ENCODE measurements at regions of chr13 and their contacts with region 1.

Region 1: DNA sequence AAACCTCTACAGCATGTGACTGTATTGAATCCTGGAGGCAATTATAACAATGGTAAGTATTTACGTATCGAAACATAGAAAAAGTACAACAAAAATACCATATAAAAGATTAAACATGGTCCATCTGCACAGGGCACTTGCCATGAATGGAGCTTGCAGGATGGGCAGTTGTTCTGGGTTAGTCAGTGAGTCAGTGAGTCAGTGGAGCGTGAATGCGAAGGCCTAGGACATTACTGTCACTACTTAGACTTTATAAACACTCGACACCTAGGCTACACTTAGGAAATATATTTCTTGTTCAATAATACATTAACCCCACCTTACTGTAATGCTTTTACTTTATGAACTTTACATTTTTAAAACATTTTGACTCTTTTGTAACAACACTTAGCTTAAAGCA is 35.6 kb upstream of the TMTC4 start:
- DNase-seq: no peak
- H3K4me3 ChIP-seq: no peak overlapping the region
- H3K27ac ChIP-seq: no peak overlapping the region
- H3K4me1 ChIP-seq: no peaks in the 10 kb centered on the region
- H3K27me3 ChIP-seq: no peaks in the 10 kb centered on the region
- CTCF ChIP-seq: no peak
- POLR2A ChIP-seq: no peak

Region 2: DNA sequence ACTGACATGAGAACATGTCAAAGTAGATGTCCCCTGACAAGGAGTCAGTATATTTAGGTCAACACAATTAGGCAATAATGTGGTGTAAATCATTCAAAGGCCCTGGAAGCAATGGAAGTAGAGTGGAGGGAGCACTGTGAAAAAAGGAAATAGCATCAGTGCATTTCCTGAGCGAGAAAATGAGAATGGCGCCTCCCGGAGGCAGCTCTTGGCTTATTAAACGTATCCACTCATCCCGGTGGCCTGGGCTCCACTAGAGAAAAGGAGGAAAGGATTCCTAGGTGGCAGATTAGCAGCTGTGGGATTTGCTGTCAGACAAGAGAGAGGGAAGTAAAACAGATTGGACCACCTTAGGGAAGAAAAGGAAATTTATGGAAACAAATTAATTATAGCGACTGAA is 138.1 kb after region 1 on chr13:
- intact Hi-C with region 1: no loop called
- DNase-seq: no peak
- H3K4me3 ChIP-seq: no peak overlapping the region
- H3K27ac ChIP-seq: no peak overlapping the region
- H3K4me1 ChIP-seq: no peaks in the 10 kb centered on the region
- H3K27me3 ChIP-seq: no peaks in the 10 kb centered on the region
- CTCF ChIP-seq: no peak
- POLR2A ChIP-seq: no peak

Region 3: DNA sequence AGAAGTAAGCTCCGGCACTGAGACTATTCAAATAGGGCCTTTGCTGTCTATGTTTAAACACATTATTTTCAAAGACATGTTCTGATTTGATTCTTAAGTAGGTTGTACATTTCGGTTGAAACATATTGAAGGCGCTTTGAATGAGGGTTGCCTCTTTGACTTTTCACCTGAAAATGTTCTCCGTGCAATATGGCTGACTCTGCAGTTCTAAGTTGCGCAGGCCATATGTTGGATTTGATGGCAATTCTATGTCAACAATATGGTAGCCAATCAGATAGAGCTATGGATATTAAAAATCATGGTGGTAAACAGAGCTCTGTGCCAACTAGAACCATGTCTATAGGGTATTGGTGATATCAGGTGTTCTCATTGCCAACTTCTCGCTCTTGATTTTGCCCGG is 398.8 kb after region 1 on chr13:
- intact Hi-C with region 1: loop called in 1 of 2 experiments (anchors 10 kb)
- DNase-seq: no peak
- H3K4me3 ChIP-seq: no peak overlapping the region
- H3K27ac ChIP-seq: no peak overlapping the region
- H3K4me1 ChIP-seq: no peaks in the 10 kb centered on the region
- H3K27me3 ChIP-seq: no peaks in the 10 kb centered on the region
- CTCF ChIP-seq: no peak
- POLR2A ChIP-seq: no peak

Measured in adrenal gland (tissue), 19 donors.